Naive thymus-derived CD4-positive, alpha-beta T cell (primary cell): ENCODE measurements at regions of chr5 and their contacts with region 1.

Region 1: GRCh38 chr5:111092062-111092853 is at the start of gene WDR36:
- DNase-seq: peak; percentile 80 to 95 (median 87)
- ATAC-seq: peak; percentile 99
- H3K4me3 ChIP-seq: peak within 1 kb of the TSS; percentile 88
- H3K4me3 Mint-ChIP-seq: peak within 1 kb of the TSS; percentile 91 to 99 (median 98)
- H3K27ac ChIP-seq: peak within 1 kb of the TSS; percentile 82
- H3K27ac Mint-ChIP-seq: peak within 1 kb of the TSS; percentile 66 to 98 (median 94)
- H3K4me1 ChIP-seq: peaks cover 11 to 20% of the 10 kb centered on the region in 2 donors
- H3K4me1 Mint-ChIP-seq: peaks cover 22 to 49% (median 39%) of the 10 kb centered on the region in 7 donors
- H3K27me3 ChIP-seq: no peaks in the 10 kb centered on the region
- H3K27me3 Mint-ChIP-seq: peaks cover 0 to 12% (median 5%) of the 10 kb centered on the region in 5 donors
- total RNA-seq, gene WDR36: 24.8 to 37.4 (median 29.7) TPM

Region 2: DNA sequence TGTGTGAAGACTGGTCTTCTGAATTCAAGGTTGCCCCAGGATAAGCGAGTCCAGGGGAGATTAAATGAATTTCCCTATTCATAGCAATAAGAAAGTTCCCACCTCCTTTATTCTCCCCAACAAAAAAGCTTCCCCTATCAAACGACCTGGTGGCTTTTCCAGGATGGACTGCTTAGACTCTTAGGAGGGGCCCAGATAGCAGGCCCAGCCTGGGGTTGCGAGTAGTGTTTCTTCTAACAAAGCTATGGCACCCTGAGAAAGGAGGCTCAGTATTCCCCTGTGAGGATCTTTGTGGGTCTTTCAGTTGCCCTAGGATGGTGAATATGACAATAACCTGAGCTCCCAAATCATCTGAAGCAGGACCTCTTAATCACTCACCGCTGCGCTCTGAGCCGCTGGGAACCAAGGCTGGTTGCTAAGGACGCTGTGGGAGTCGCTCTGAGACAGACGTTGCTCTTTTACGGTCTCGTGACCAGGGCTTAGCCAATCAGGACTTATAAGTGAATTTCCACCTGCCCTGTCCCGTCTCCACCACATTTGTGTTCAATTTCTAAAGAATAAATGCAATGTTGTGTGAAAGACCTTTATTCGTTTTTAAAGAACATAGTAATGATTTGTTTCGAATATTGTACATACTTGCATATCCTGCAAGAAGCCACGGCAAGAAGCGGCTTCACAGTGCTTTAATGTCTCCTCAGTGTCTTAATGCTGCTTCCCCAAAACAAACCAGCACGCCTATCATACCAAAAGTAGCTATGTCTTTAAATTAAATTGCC is 365.8 kb before region 1 on chr5 and contains the start of gene TMEM232:
- CTCF ChIA-PET with region 1: no interaction called
- POLR2A ChIA-PET with region 1: no interaction called
- intact Hi-C with region 1: loop called in 1 of 2 experiments (anchors 2 kb)
- DNase-seq: peak; percentile 40 to 85 (median 65)
- ATAC-seq: peak; percentile 99
- H3K4me3 ChIP-seq: peak within 1 kb of the TSS; percentile 59
- H3K4me3 Mint-ChIP-seq: peak within 1 kb of the TSS; percentile 73 to 97 (median 86)
- H3K27ac ChIP-seq: peak within 1 kb of the TSS; percentile 37
- H3K27ac Mint-ChIP-seq: peak within 1 kb of the TSS in 7 of 9 donors; percentile 15 to 79 (median 65)
- H3K4me1 ChIP-seq: no peaks in the 10 kb centered on the region
- H3K4me1 Mint-ChIP-seq: peaks cover 0 to 8% (median 0%) of the 10 kb centered on the region in 7 donors
- H3K27me3 ChIP-seq: no peaks in the 10 kb centered on the region
- H3K27me3 Mint-ChIP-seq: peaks cover 0 to 3% (median 0%) of the 10 kb centered on the region in 5 donors
- total RNA-seq, gene TMEM232: 1.6 to 3.0 (median 2.9) TPM

Region 3: GRCh38 chr5:110751902-110752762 is 340.1 kb before region 1 on chr5:
- CTCF ChIA-PET with region 1: no interaction called
- POLR2A ChIA-PET with region 1: no interaction called
- intact Hi-C with region 1: loop called (anchors 2 kb)
- DNase-seq: peak in 2 of 9 donors; percentile 8 to 30
- ATAC-seq: peak; percentile 82
- H3K4me3 ChIP-seq: no peak overlapping the region
- H3K4me3 Mint-ChIP-seq: peak overlapping the region in 1 of 10 donors; percentile 68
- H3K27ac ChIP-seq: no peak overlapping the region
- H3K27ac Mint-ChIP-seq: peak overlapping the region in 8 of 9 donors; percentile 5 to 84 (median 59)
- H3K4me1 ChIP-seq: peaks cover 0 to 12% of the 10 kb centered on the region in 2 donors
- H3K4me1 Mint-ChIP-seq: peaks cover 15 to 47% (median 34%) of the 10 kb centered on the region in 7 donors
- H3K27me3 ChIP-seq: no peaks in the 10 kb centered on the region
- H3K27me3 Mint-ChIP-seq: no peaks in the 10 kb centered on the region

Region 4: GRCh38 chr5:111072949-111073682 is 19.1 kb before region 1 on chr5:
- CTCF ChIA-PET with region 1: no interaction called
- POLR2A ChIA-PET with region 1: no interaction called
- intact Hi-C with region 1: loop called in 1 of 2 experiments (anchors 2 kb)
- DNase-seq: peak; percentile 10 to 69 (median 37)
- ATAC-seq: peak; percentile 86
- H3K4me3 ChIP-seq: peak overlapping the region; percentile 67
- H3K4me3 Mint-ChIP-seq: peak overlapping the region; percentile 84 to 95 (median 90)
- H3K27ac ChIP-seq: no peak overlapping the region
- H3K27ac Mint-ChIP-seq: peak overlapping the region in 3 of 9 donors; percentile 4 to 55 (median 53)
- H3K4me1 ChIP-seq: peaks cover 4 to 15% of the 10 kb centered on the region in 2 donors
- H3K4me1 Mint-ChIP-seq: peaks cover 11 to 39% (median 30%) of the 10 kb centered on the region in 7 donors
- H3K27me3 ChIP-seq: peaks cover 14% of the 10 kb centered on the region in 2 donors
- H3K27me3 Mint-ChIP-seq: peaks cover 68 to 82% (median 77%) of the 10 kb centered on the region in 5 donors

Region 5: DNA sequence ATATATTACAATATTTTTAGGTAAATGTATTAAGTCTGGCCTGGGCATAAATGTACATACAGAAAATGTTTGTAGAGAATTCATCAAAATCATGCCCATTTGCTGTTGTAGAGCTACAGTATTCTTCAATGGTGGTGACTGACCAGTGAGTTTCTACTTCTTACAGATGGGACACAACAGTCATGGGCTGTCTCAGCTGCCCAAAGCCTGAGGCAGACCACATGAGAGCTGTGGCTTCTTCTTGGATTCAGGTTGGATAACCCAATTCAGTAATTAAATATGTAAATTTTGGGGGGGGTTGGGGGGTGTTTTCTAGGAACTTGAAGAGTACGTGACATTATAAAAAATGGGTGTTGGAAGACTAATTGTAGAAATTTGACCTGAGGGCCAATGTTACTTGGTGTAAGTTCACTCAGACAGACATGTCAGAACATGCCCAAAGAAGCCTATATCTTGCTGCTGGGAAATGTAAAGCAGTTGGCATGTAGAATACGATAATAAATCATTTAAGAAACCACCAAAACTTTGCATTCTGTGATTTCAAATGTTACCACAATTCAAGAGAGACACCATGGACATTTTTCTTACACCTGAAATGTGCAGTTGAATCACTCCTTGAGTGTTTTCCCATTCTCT is 402.2 kb after region 1 on chr5:
- CTCF ChIA-PET with region 1: no interaction called
- POLR2A ChIA-PET with region 1: no interaction called
- intact Hi-C with region 1: no loop called
- DNase-seq: no peak
- ATAC-seq: no peak
- H3K4me3 ChIP-seq: no peak overlapping the region
- H3K4me3 Mint-ChIP-seq: no peak overlapping the region
- H3K27ac ChIP-seq: no peak overlapping the region
- H3K27ac Mint-ChIP-seq: peak overlapping the region in 6 of 9 donors; percentile 3 to 77 (median 54)
- H3K4me1 ChIP-seq: no peaks in the 10 kb centered on the region
- H3K4me1 Mint-ChIP-seq: peaks cover 0 to 41% (median 11%) of the 10 kb centered on the region in 7 donors
- H3K27me3 ChIP-seq: no peaks in the 10 kb centered on the region
- H3K27me3 Mint-ChIP-seq: no peaks in the 10 kb centered on the region

Region 6: GRCh38 chr5:111512375-111513130 is 420.3 kb after region 1 on chr5 and contains the start of gene STARD4:
- CTCF ChIA-PET with region 1: no interaction called
- POLR2A ChIA-PET with region 1: interaction called, 6 read pairs
- intact Hi-C with region 1: loop called (anchors 1 kb)
- DNase-seq: peak; percentile 79 to 94 (median 92)
- ATAC-seq: peak; percentile 97
- H3K4me3 ChIP-seq: peak within 1 kb of the TSS; percentile 81
- H3K4me3 Mint-ChIP-seq: peak within 1 kb of the TSS; percentile 91 to 100 (median 98)
- H3K27ac ChIP-seq: peak within 1 kb of the TSS; percentile 73
- H3K27ac Mint-ChIP-seq: peak within 1 kb of the TSS; percentile 90 to 98 (median 94)
- H3K4me1 ChIP-seq: peaks cover 0 to 14% of the 10 kb centered on the region in 2 donors
- H3K4me1 Mint-ChIP-seq: peaks cover 17 to 53% (median 28%) of the 10 kb centered on the region in 7 donors
- H3K27me3 ChIP-seq: no peaks in the 10 kb centered on the region
- H3K27me3 Mint-ChIP-seq: no peaks in the 10 kb centered on the region
- total RNA-seq, gene STARD4: 11.1 to 70.8 (median 17.1) TPM

Region 7: DNA sequence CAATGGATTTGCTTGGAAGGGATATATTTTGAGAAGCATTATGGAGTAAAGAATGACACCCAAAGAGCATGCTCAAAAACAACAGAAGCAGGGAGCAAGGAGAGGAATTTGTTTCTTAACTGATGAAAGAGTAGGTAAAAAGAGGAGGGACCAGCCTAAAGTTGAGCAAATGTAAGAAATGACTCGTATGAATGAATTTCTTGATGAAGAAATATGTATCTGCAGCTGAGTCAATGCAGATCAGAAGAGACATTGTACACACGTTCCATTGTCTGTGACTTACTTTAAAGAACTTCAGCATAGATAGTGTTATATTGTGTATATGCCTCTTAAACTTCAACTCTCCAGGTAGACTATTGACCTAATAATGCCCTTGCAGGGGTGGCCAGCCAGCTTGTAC is 777.4 kb after region 1 on chr5:
- CTCF ChIA-PET with region 1: no interaction called
- POLR2A ChIA-PET with region 1: no interaction called
- intact Hi-C with region 1: no loop called
- DNase-seq: no peak
- ATAC-seq: no peak
- H3K4me3 ChIP-seq: no peak overlapping the region
- H3K4me3 Mint-ChIP-seq: no peak overlapping the region
- H3K27ac ChIP-seq: no peak overlapping the region
- H3K27ac Mint-ChIP-seq: no peak overlapping the region
- H3K4me1 ChIP-seq: no peaks in the 10 kb centered on the region
- H3K4me1 Mint-ChIP-seq: no peaks in the 10 kb centered on the region
- H3K27me3 ChIP-seq: no peaks in the 10 kb centered on the region
- H3K27me3 Mint-ChIP-seq: no peaks in the 10 kb centered on the region